Upper lobe of right lung (tissue), 1 donor: ENCODE measurements at regions of chr11 and their contacts with region 1.

Region 1: GRCh38 chr11:126194121-126194543 is 17.3 kb downstream of the RPUSD4 start:
- DNase-seq: no peak
- ATAC-seq: peak; percentile 73
- H3K4me3 ChIP-seq: no peak overlapping the region
- H3K27ac ChIP-seq: no peak overlapping the region
- H3K4me1 ChIP-seq: no peaks in the 10 kb centered on the region
- H3K27me3 ChIP-seq: no peaks in the 10 kb centered on the region
- CTCF ChIP-seq: peak; percentile 67

Region 2: GRCh38 chr11:125923012-125923579 is 271.0 kb before region 1 on chr11:
- intact Hi-C with region 1: loop called (anchors 5 kb)
- DNase-seq: peak; percentile 43
- ATAC-seq: peak; percentile 90
- H3K4me3 ChIP-seq: no peak overlapping the region
- H3K27ac ChIP-seq: no peak overlapping the region
- H3K4me1 ChIP-seq: no peaks in the 10 kb centered on the region
- H3K27me3 ChIP-seq: no peaks in the 10 kb centered on the region
- CTCF ChIP-seq: peak; percentile 76

Region 3: DNA sequence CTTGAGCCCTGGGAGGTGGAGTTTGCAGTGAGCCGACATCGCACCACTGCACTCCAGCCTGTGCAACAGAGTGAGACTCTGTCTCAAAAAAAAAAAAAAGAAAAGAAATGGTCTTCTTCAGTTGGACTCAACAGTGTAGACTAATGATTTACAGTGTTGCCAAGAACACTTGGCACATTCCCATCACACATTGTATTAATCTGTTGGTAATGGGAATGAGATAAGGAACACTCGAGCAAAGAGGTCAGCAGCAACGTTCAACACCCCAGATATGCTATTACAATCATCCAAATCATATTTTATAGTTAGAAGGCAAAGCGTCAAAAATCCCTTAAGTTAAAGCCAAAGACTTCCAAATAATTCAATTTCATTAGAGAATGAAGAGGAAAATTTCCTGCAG is 145.9 kb before region 1 on chr11:
- intact Hi-C with region 1: no loop called
- DNase-seq: no peak
- ATAC-seq: no peak
- H3K4me3 ChIP-seq: no peak overlapping the region
- H3K27ac ChIP-seq: no peak overlapping the region
- H3K4me1 ChIP-seq: no peaks in the 10 kb centered on the region
- H3K27me3 ChIP-seq: no peaks in the 10 kb centered on the region
- CTCF ChIP-seq: no peak